ENCODE measurements at regions of chr3 and their contacts with region 1.

Region 1: DNA sequence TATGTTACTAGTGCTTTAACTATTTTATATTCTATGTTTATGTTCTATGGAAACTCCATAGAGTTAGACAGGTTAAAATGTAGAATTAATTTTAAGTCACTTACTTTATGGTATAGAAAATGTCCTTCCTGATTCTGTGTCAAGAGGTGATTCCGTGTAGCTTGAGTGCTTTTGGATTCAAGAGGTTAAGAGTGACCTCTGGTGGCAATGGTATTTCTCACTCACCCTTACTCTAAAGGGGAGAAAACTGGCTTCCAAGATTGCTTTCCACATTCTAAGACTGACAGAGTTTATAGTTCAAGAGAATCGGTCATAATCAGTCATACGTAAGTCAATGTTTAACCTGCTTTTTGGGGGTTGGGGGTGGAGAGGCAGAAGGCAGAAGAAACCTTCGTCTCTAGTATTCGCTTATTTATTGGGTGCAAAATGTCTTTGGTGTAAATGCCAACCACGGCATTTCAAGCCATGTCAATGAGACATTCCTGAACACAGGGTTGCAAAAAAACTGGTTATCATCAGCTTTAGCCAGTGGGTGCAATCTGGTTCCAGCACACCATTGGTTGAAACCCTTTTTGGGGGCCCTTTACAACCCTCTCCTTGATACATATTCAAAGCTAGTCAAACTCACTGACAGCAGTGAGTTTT is 92.0 kb upstream of the VGLL3 start:
- DNase-seq: peak; percentile 65 to 83 (median 78)
- H3K4me3 ChIP-seq: no peak overlapping the region
- H3K27ac ChIP-seq: no peak overlapping the region
- H3K4me1 ChIP-seq: no peaks in the 10 kb centered on the region
- H3K27me3 ChIP-seq: no peaks in the 10 kb centered on the region

Region 2: GRCh38 chr3:86969500-86970189 is 113.3 kb before region 1 on chr3:
- CTCF ChIA-PET with region 1: interaction called, 12 read pairs
- POLR2A ChIA-PET with region 1: no interaction called
- DNase-seq: peak; percentile 50 to 67 (median 65)
- H3K4me3 ChIP-seq: no peak overlapping the region
- H3K27ac ChIP-seq: no peak overlapping the region
- H3K4me1 ChIP-seq: no peaks in the 10 kb centered on the region
- H3K27me3 ChIP-seq: peaks cover 0 to 5% (median 0%) of the 10 kb centered on the region in 5 experiments

Region 3: DNA sequence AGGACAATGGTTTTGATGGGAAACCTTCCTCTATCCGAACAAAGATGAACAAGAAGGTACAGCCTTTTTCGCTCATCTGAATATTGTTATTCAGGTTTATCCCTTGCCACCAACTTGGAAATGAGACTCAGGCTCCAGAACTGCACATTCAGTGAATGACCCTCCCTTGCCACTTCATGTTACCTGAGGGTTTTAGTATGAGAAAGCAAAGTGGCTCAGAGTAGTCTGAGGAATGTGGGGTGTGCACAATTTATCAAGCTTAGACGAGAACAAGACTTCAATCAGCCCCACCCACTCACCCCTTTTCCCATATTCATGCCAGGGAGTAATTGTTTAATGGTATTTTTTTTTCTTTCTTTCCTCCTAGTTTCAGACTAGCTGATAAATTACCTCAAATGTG is 458.8 kb after region 1 on chr3:
- CTCF ChIA-PET with region 1: no interaction called
- POLR2A ChIA-PET with region 1: no interaction called
- DNase-seq: no peak
- H3K4me3 ChIP-seq: no peak overlapping the region
- H3K27ac ChIP-seq: no peak overlapping the region
- H3K4me1 ChIP-seq: no peaks in the 10 kb centered on the region
- H3K27me3 ChIP-seq: no peaks in the 10 kb centered on the region

Measured in common myeloid progenitor, CD34-positive (primary cell).